CD4-positive, alpha-beta T cell (primary cell): ENCODE measurements at regions of chr14 and their contacts with region 1.

Region 1: GRCh38 chr14:21723431-21724045 is 49.9 kb upstream of the OR4E1 start:
- DNase-seq: peak in 11 of 14 experiments; percentile 18 to 72 (median 32)
- ATAC-seq: peak; percentile 82
- H3K4me3 ChIP-seq: peak overlapping the region; percentile 44
- H3K4me3 Mint-ChIP-seq: peak overlapping the region; percentile 85
- H3K27ac ChIP-seq: no peak overlapping the region
- H3K27ac Mint-ChIP-seq: peak overlapping the region; percentile 75
- H3K4me1 ChIP-seq: no peaks in the 10 kb centered on the region
- H3K4me1 Mint-ChIP-seq: no peaks in the 10 kb centered on the region
- H3K27me3 ChIP-seq: peaks cover 0 to 5% of the 10 kb centered on the region in 2 experiments
- H3K27me3 Mint-ChIP-seq: peaks cover 51% of the 10 kb centered on the region
- CTCF ChIP-seq: peak; percentile 32

Region 2: GRCh38 chr14:21686468-21686867 is 37.1 kb before region 1 on chr14:
- CTCF ChIA-PET with region 1: no interaction called
- POLR2A ChIA-PET with region 1: no interaction called
- intact Hi-C with region 1: no loop called
- DNase-seq: no peak
- ATAC-seq: no peak
- H3K4me3 ChIP-seq: no peak overlapping the region
- H3K4me3 Mint-ChIP-seq: no peak overlapping the region
- H3K27ac ChIP-seq: no peak overlapping the region
- H3K27ac Mint-ChIP-seq: no peak overlapping the region
- H3K4me1 ChIP-seq: no peaks in the 10 kb centered on the region
- H3K4me1 Mint-ChIP-seq: no peaks in the 10 kb centered on the region
- H3K27me3 ChIP-seq: peaks cover 0 to 15% of the 10 kb centered on the region in 2 experiments
- H3K27me3 Mint-ChIP-seq: peaks cover 47% of the 10 kb centered on the region
- CTCF ChIP-seq: no peak

Region 3: GRCh38 chr14:21711360-21711961 is 12.1 kb before region 1 on chr14:
- CTCF ChIA-PET with region 1: interaction called, 11 read pairs
- POLR2A ChIA-PET with region 1: interaction called, 6 read pairs
- intact Hi-C with region 1: no loop called
- DNase-seq: peak in 6 of 14 experiments; percentile 8 to 70 (median 48)
- ATAC-seq: peak; percentile 60
- H3K4me3 ChIP-seq: no peak overlapping the region
- H3K4me3 Mint-ChIP-seq: peak overlapping the region; percentile 81
- H3K27ac ChIP-seq: no peak overlapping the region
- H3K27ac Mint-ChIP-seq: peak overlapping the region; percentile 77
- H3K4me1 ChIP-seq: peaks cover 5% of the 10 kb centered on the region
- H3K4me1 Mint-ChIP-seq: peaks cover 14% of the 10 kb centered on the region
- H3K27me3 ChIP-seq: peaks cover 0 to 3% of the 10 kb centered on the region in 2 experiments
- H3K27me3 Mint-ChIP-seq: peaks cover 37% of the 10 kb centered on the region
- CTCF ChIP-seq: peak; percentile 90

Region 4: GRCh38 chr14:22213120-22213519 is 489.6 kb after region 1 on chr14:
- CTCF ChIA-PET with region 1: no interaction called
- POLR2A ChIA-PET with region 1: no interaction called
- intact Hi-C with region 1: no loop called
- DNase-seq: no peak
- ATAC-seq: no peak
- H3K4me3 ChIP-seq: no peak overlapping the region
- H3K4me3 Mint-ChIP-seq: no peak overlapping the region
- H3K27ac ChIP-seq: no peak overlapping the region
- H3K27ac Mint-ChIP-seq: no peak overlapping the region
- H3K4me1 ChIP-seq: no peaks in the 10 kb centered on the region
- H3K4me1 Mint-ChIP-seq: no peaks in the 10 kb centered on the region
- H3K27me3 ChIP-seq: no peaks in the 10 kb centered on the region
- H3K27me3 Mint-ChIP-seq: no peaks in the 10 kb centered on the region
- CTCF ChIP-seq: no peak